Dorsolateral prefrontal cortex (tissue), 120 donors: ENCODE measurements at regions of chr3 and their contacts with region 1.

Region 1: GRCh38 chr3:105448338-105448982 is 81.8 kb downstream of the ALCAM start:
- DNase-seq: peak; percentile 13 to 95 (median 83)
- H3K4me3 ChIP-seq: peak overlapping the region in 36 of 59 donors; percentile 2 to 55 (median 30)
- H3K27ac ChIP-seq: peak overlapping the region; percentile 60 to 100 (median 92)
- H3K27me3 ChIP-seq: no peaks in the 10 kb centered on the region
- CTCF ChIP-seq: peak in 7 of 56 donors; percentile 7 to 20 (median 17)

Region 2: GRCh38 chr3:105385819-105386508 is 62.5 kb before region 1 on chr3:
- intact Hi-C with region 1: no loop called
- DNase-seq: no peak
- H3K4me3 ChIP-seq: peak overlapping the region in 3 of 59 donors; percentile 8 to 32 (median 27)
- H3K27ac ChIP-seq: peak overlapping the region in 35 of 59 donors; percentile 2 to 75 (median 39)
- H3K27me3 ChIP-seq: no peaks in the 10 kb centered on the region
- CTCF ChIP-seq: no peak

Region 3: DNA sequence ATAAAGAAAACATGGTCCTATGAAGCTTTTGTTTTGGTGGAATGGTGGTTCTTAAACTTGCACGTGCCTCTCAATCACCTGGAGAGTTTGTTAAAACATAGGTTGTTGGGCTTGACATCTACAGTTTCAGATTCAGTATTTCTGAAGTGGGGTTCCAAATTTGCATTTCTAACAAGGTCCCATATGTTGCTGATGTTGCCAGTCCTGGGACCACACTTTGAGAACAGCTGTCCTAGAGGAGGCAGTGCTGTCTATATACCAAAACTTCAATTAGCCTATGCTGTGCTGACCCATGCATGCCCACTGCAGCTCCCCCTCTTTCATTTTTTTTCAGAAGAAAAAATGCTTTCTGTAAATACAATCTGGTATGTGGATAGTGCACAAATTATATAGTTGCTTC is 50.5 kb before region 1 on chr3:
- intact Hi-C with region 1: loop called in 1 of 2 experiments (anchors 5 kb)
- DNase-seq: no peak
- H3K4me3 ChIP-seq: peak overlapping the region in 4 of 59 donors; percentile 4 to 35 (median 11)
- H3K27ac ChIP-seq: peak overlapping the region in 50 of 59 donors; percentile 18 to 91 (median 76)
- H3K27me3 ChIP-seq: no peaks in the 10 kb centered on the region
- CTCF ChIP-seq: peak in 5 of 56 donors; percentile 13 to 23 (median 16)

Region 4: GRCh38 chr3:105505170-105505569 is 56.7 kb after region 1 on chr3:
- intact Hi-C with region 1: no loop called
- DNase-seq: no peak
- H3K4me3 ChIP-seq: no peak overlapping the region
- H3K27ac ChIP-seq: peak overlapping the region in 30 of 59 donors; percentile 2 to 79 (median 56)
- H3K27me3 ChIP-seq: no peaks in the 10 kb centered on the region
- CTCF ChIP-seq: no peak

Region 5: GRCh38 chr3:105518806-105519418 is 70.5 kb after region 1 on chr3:
- intact Hi-C with region 1: loop called (anchors 2 to 5 kb)
- DNase-seq: peak in 1 of 10 donors; percentile 14
- H3K4me3 ChIP-seq: peak overlapping the region in 15 of 59 donors; percentile 3 to 33 (median 20)
- H3K27ac ChIP-seq: peak overlapping the region in 50 of 59 donors; percentile 3 to 85 (median 70)
- H3K27me3 ChIP-seq: no peaks in the 10 kb centered on the region
- CTCF ChIP-seq: peak; percentile 67 to 98 (median 85)